Calu3 (cell line): ENCODE measurements at regions of chr16 and their contacts with region 1.

Region 1: GRCh38 chr16:21708533-21709115 is 44.9 kb downstream of the OTOA start:
- DNase-seq: peak; percentile 89
- H3K4me3 Mint-ChIP-seq: peak overlapping the region; percentile 37
- H3K27ac Mint-ChIP-seq: no peak overlapping the region
- H3K4me1 Mint-ChIP-seq: peaks cover 6% of the 10 kb centered on the region
- H3K27me3 Mint-ChIP-seq: peaks cover 6% of the 10 kb centered on the region
- CTCF ChIP-seq: peak; percentile 82

Region 2: DNA sequence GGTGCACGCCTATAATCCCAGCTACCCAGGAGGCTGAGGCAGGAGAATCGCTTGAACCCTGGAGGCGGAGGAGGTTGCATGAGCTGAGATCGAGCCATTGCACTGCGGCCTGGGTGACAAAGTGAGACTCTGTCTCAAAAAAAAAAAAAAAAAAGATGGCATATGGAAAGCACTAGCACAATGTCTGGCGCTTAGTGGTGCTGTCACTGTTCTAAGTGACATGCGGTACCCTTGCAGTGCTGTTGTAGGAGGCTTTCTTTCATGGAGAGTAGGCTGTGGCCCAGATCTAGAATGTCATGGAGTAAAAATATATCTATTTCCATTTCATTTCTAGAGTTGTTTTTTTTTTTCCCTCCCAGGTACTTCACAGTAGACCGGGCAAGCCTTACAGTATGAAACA is 123.8 kb before region 1 on chr16:
- CTCF ChIA-PET with region 1: interaction called, 3 read pairs
- intact Hi-C with region 1: loop called (anchors 1 kb)
- DNase-seq: no peak
- H3K4me3 Mint-ChIP-seq: no peak overlapping the region
- H3K27ac Mint-ChIP-seq: no peak overlapping the region
- H3K4me1 Mint-ChIP-seq: no peaks in the 10 kb centered on the region
- H3K27me3 Mint-ChIP-seq: no peaks in the 10 kb centered on the region
- CTCF ChIP-seq: no peak

Region 3: GRCh38 chr16:21599233-21600030 is 109.2 kb before region 1 on chr16 and contains the start of gene METTL9:
- CTCF ChIA-PET with region 1: no interaction called
- intact Hi-C with region 1: no loop called
- DNase-seq: peak; percentile 98
- H3K4me3 Mint-ChIP-seq: peak within 1 kb of the TSS; percentile 95
- H3K27ac Mint-ChIP-seq: peak within 1 kb of the TSS; percentile 60
- H3K4me1 Mint-ChIP-seq: peaks cover 30% of the 10 kb centered on the region
- H3K27me3 Mint-ChIP-seq: no peaks in the 10 kb centered on the region
- CTCF ChIP-seq: peak; percentile 16
- total RNA-seq, gene METTL9: 86.5 and 109 TPM in 2 replicates

Region 4: DNA sequence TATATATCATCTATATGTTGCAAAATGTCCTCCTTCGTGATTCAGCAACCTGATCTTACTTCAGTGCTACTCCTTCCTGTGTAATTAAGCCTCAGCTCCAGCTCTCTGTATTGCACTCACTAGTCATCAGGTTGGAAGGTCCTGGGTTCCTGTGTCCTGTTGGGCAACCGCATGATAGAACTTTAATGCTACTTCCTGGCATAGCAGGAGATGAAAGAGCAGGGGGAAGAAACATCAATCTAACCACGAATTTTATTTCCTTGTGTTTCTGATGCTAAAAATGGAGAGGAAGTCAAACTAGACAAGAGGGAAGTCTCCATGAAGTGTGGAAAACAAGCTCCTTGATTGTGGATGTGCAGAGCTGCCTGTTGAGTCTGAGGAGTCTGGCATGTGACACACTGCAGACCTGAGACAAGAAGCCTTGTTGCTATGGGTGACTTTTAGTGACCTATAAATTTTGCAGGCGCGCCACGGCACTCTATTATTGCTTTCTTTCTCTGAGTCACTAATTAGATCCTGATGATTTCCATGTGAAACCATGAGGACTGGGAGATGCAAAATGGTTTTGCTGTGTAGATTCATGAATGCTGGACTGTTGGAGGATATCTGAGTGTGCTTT is 81.9 kb before region 1 on chr16:
- CTCF ChIA-PET with region 1: no interaction called
- intact Hi-C with region 1: no loop called
- DNase-seq: peak; percentile 63
- H3K4me3 Mint-ChIP-seq: peak overlapping the region; percentile 39
- H3K27ac Mint-ChIP-seq: peak overlapping the region; percentile 80
- H3K4me1 Mint-ChIP-seq: peaks cover 56% of the 10 kb centered on the region
- H3K27me3 Mint-ChIP-seq: no peaks in the 10 kb centered on the region
- CTCF ChIP-seq: no peak

Region 5: GRCh38 chr16:21656795-21657768 is 51.5 kb before region 1 on chr16:
- CTCF ChIA-PET with region 1: interaction called, 8 read pairs
- intact Hi-C with region 1: loop called (anchors 1 kb)
- DNase-seq: peak; percentile 62
- H3K4me3 Mint-ChIP-seq: no peak overlapping the region
- H3K27ac Mint-ChIP-seq: no peak overlapping the region
- H3K4me1 Mint-ChIP-seq: peaks cover 9% of the 10 kb centered on the region
- H3K27me3 Mint-ChIP-seq: no peaks in the 10 kb centered on the region
- CTCF ChIP-seq: peak; percentile 88